Activated naive CD4-positive, alpha-beta T cell treated with anti-CD3 and anti-CD28 coated beads for 36 hours (primary cell): ENCODE measurements at regions of chr12 and their contacts with region 1.

Region 1: DNA sequence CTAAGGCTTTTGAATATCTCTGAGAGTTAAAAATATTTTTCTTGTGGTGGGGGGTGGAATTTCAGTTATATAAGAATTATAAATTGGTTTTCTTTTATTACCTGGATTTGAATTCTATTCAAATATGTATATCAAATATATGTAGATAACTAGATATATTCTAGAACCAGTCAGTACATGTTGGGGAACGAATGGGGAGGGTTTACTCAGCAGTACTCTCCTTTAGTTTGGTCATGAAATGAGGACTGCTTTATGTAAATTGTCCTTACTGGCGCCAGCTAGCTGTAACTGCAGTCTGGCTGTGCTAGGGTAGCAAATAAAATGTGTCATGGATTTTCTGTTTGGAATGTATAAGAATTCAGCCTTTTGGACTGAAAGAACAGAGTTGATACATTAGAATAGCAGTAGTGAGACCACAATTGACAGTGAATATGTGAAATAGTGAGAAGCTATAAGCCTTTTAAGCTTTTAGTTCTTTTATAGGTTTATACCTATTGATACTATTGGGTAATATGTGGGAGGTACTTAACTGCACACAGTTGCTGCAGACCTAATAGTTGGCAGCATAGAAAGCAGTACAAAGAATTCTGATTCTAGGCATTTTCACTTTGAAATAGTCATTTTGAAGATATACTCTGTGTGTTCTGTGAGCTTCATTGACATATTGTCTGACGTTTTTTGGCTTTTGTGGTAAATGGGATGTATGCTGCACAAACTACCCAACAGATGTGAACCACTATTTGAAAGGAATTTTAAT is 29.0 kb downstream of the ATF7IP start:
- DNase-seq: peak; percentile 62
- H3K4me3 Mint-ChIP-seq: peak overlapping the region; percentile 77
- H3K27ac Mint-ChIP-seq: peak overlapping the region; percentile 98
- H3K4me1 Mint-ChIP-seq: peaks cover 82% of the 10 kb centered on the region
- H3K27me3 Mint-ChIP-seq: no peaks in the 10 kb centered on the region

Region 2: GRCh38 chr12:14216405-14217294 is 177.8 kb before region 1 on chr12:
- CTCF ChIA-PET with region 1: interaction called, 4 read pairs
- intact Hi-C with region 1: loop called (anchors 1 kb)
- DNase-seq: no peak
- H3K4me3 Mint-ChIP-seq: no peak overlapping the region
- H3K27ac Mint-ChIP-seq: peak overlapping the region; percentile 70
- H3K4me1 Mint-ChIP-seq: peaks cover 24% of the 10 kb centered on the region
- H3K27me3 Mint-ChIP-seq: no peaks in the 10 kb centered on the region

Region 3: GRCh38 chr12:14417715-14418114 is 23.2 kb after region 1 on chr12:
- CTCF ChIA-PET with region 1: interaction called, 10 read pairs
- intact Hi-C with region 1: loop called (anchors 1 kb)
- DNase-seq: peak; percentile 89
- H3K4me3 Mint-ChIP-seq: peak overlapping the region; percentile 70
- H3K27ac Mint-ChIP-seq: peak overlapping the region; percentile 90
- H3K4me1 Mint-ChIP-seq: peaks cover 59% of the 10 kb centered on the region
- H3K27me3 Mint-ChIP-seq: no peaks in the 10 kb centered on the region

Region 4: GRCh38 chr12:14650789-14651188 is 256.3 kb after region 1 on chr12:
- CTCF ChIA-PET with region 1: no interaction called
- intact Hi-C with region 1: no loop called
- DNase-seq: no peak
- H3K4me3 Mint-ChIP-seq: no peak overlapping the region
- H3K27ac Mint-ChIP-seq: no peak overlapping the region
- H3K4me1 Mint-ChIP-seq: peaks cover 5% of the 10 kb centered on the region
- H3K27me3 Mint-ChIP-seq: no peaks in the 10 kb centered on the region